ENCODE measurements at regions of chr13 and their contacts with region 1.

Region 1: DNA sequence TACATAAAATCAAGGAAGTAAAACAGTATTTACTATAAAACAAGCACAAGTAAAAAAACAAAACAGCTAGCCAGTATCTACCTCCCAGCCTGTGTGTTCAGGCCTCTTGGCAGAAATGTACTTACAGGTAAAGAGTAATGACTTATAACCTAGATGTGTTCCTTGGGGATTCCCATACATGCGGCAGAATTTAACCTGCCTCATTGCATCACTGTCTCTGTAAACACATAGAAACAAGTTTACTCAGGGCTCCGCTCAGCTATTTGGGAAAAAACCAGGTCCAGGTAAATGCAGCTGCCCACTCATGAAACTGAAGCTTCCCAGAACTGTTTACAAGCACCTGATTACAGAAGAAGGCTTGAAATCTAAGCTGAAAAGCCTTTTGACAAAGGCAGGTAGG is 50.7 kb upstream of the SERP2 start:
- DNase-seq: no peak
- ATAC-seq: no peak
- H3K4me3 ChIP-seq: no peak overlapping the region
- H3K27ac ChIP-seq: no peak overlapping the region
- H3K4me1 ChIP-seq: peaks cover 2% of the 10 kb centered on the region
- H3K27me3 ChIP-seq: no peaks in the 10 kb centered on the region
- CTCF ChIP-seq: no peak

Region 2: GRCh38 chr13:44425041-44425814 is 102.3 kb after region 1 on chr13:
- intact Hi-C with region 1: loop called in 1 of 2 experiments (anchors 5 kb)
- DNase-seq: no peak
- ATAC-seq: no peak
- H3K4me3 ChIP-seq: no peak overlapping the region
- H3K27ac ChIP-seq: no peak overlapping the region
- H3K4me1 ChIP-seq: no peaks in the 10 kb centered on the region
- H3K27me3 ChIP-seq: no peaks in the 10 kb centered on the region
- CTCF ChIP-seq: no peak

Region 3: GRCh38 chr13:44484562-44485138 is 161.7 kb after region 1 on chr13:
- intact Hi-C with region 1: no loop called
- DNase-seq: no peak
- ATAC-seq: no peak
- H3K4me3 ChIP-seq: peak overlapping the region; percentile 11
- H3K27ac ChIP-seq: no peak overlapping the region
- H3K4me1 ChIP-seq: peaks cover 33% of the 10 kb centered on the region
- H3K27me3 ChIP-seq: no peaks in the 10 kb centered on the region
- CTCF ChIP-seq: no peak